ENCODE measurements at regions of chr10 and their contacts with region 1.

Region 1: GRCh38 chr10:29496341-29497162 is 138.2 kb downstream of the SVIL start:
- DNase-seq: peak; percentile 75
- ATAC-seq: peak; percentile 88
- H3K4me3 Mint-ChIP-seq: no peak overlapping the region
- H3K27ac Mint-ChIP-seq: no peak overlapping the region
- H3K4me1 Mint-ChIP-seq: peaks cover 2% of the 10 kb centered on the region
- H3K27me3 Mint-ChIP-seq: no peaks in the 10 kb centered on the region

Region 2: GRCh38 chr10:29440981-29441380 is 55.6 kb before region 1 on chr10:
- CTCF ChIA-PET with region 1: interaction called, 15 read pairs
- DNase-seq: no peak
- ATAC-seq: no peak
- H3K4me3 Mint-ChIP-seq: no peak overlapping the region
- H3K27ac Mint-ChIP-seq: no peak overlapping the region
- H3K4me1 Mint-ChIP-seq: peaks cover 10% of the 10 kb centered on the region
- H3K27me3 Mint-ChIP-seq: no peaks in the 10 kb centered on the region

Region 3: GRCh38 chr10:29446327-29446726 is 50.2 kb before region 1 on chr10:
- CTCF ChIA-PET with region 1: interaction called, 15 read pairs
- DNase-seq: no peak
- ATAC-seq: no peak
- H3K4me3 Mint-ChIP-seq: no peak overlapping the region
- H3K27ac Mint-ChIP-seq: peak overlapping the region; percentile 55
- H3K4me1 Mint-ChIP-seq: peaks cover 21% of the 10 kb centered on the region
- H3K27me3 Mint-ChIP-seq: no peaks in the 10 kb centered on the region

Region 4: GRCh38 chr10:29470355-29470705 is 26.2 kb before region 1 on chr10:
- CTCF ChIA-PET with region 1: interaction called, 19 read pairs
- DNase-seq: no peak
- ATAC-seq: no peak
- H3K4me3 Mint-ChIP-seq: no peak overlapping the region
- H3K27ac Mint-ChIP-seq: no peak overlapping the region
- H3K4me1 Mint-ChIP-seq: peaks cover 20% of the 10 kb centered on the region
- H3K27me3 Mint-ChIP-seq: no peaks in the 10 kb centered on the region

Region 5: DNA sequence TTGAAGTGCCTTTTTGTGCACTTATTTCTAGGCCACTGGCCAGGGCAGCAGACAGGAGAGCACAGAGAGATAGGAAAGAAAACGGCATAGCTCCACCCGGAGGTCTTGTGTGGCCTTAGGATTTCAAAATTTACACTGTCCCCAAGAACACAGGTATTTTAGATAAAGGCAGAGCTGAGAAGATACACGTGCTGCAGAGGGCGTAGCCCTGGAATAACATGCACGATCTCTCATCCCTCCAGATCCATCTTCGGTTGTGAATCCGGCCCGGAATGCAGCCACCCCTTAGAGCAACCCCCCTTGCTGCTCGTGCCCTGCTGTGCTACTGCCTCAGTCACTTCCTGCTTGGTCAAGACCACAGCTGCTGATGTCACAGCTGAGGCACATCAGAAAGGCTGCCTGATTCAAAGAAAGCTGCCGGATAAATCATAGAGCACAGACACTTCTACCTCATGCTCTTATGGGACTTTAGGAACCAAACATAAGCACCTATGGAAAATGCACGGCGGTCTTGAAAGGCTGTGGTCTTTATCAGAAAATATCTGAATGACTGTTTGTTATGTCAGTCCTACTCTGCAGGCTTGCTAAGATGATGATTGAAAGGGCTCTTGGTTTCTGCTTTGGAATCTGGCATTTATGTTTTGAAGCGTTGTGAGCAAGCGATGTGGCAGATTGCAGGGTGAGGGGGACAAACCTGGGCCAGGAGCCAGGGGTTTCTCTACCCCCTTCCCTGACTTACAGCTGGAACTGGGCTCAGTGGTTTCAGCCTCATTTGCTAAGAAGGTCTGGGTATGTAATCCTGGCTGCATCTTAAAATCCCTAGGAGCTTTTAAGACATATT is 13.7 kb before region 1 on chr10:
- CTCF ChIA-PET with region 1: interaction called, 27 read pairs
- DNase-seq: peak; percentile 83
- ATAC-seq: peak; percentile 94
- H3K4me3 Mint-ChIP-seq: peak overlapping the region; percentile 49
- H3K27ac Mint-ChIP-seq: peak overlapping the region; percentile 82
- H3K4me1 Mint-ChIP-seq: peaks cover 64% of the 10 kb centered on the region
- H3K27me3 Mint-ChIP-seq: no peaks in the 10 kb centered on the region